ENCODE measurements at regions of chrX and their contacts with region 1.

Region 1: DNA sequence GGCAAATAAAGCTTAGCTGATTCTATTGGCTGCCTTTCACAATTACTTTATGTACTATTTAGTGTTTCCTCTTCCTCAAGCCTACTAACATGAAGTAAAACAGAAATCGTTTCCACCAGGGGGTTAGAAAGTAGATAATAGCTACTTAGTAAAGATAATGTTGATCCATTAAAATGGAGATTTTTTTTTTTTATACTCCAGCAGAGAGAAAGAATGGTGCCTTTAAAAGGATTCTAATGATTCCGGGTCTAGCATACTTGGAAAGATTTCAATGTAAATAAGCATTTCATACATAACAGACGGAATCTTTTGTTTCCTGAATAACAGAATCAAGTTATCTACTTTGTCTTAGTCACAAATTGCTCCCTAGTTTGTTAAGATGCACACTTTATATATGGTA is 37.1 kb downstream of the GK start:
- DNase-seq: no peak
- H3K4me3 Mint-ChIP-seq: no peak overlapping the region
- H3K27ac Mint-ChIP-seq: no peak overlapping the region
- H3K4me1 Mint-ChIP-seq: no peaks in the 10 kb centered on the region
- H3K27me3 Mint-ChIP-seq: no peaks in the 10 kb centered on the region

Region 2: DNA sequence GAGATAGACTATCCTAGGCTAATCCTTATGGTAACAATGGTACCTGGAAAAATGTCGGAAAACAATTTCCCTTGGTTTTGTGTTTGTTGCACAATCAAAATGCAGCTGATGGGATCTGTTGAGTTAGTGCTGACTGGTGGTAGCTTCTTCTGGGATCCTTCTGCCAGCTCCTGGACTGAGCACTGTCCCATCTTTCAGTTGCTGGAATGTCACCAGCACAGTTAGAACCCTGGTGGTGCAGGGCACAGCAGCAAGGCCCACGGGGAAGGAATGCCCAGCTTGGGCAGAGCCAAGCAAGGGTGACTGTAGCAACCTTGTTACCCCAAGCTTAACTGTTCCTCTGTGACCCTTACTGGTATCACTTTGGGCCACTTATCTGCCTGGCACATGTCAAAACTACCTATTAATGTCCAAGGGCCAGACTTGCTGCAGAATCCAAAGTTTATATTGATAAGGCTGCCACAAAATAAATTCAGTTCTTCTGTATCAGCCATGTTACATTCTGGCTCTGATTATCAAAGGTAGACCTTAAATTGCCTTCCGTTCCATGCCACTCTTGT is 16.0 kb after region 1 on chrX:
- intact Hi-C with region 1: loop called (anchors 2 kb)
- DNase-seq: no peak
- H3K4me3 Mint-ChIP-seq: no peak overlapping the region
- H3K27ac Mint-ChIP-seq: no peak overlapping the region
- H3K4me1 Mint-ChIP-seq: peaks cover 20% of the 10 kb centered on the region
- H3K27me3 Mint-ChIP-seq: no peaks in the 10 kb centered on the region

Region 3: GRCh38 chrX:30943984-30944780 is 253.9 kb after region 1 on chrX:
- intact Hi-C with region 1: no loop called
- DNase-seq: no peak
- H3K4me3 Mint-ChIP-seq: no peak overlapping the region
- H3K27ac Mint-ChIP-seq: no peak overlapping the region
- H3K4me1 Mint-ChIP-seq: peaks cover 3% of the 10 kb centered on the region
- H3K27me3 Mint-ChIP-seq: peaks cover 8% of the 10 kb centered on the region

Measured in activated T-helper 2 cell treated with anti-CD3 and anti-CD28 coated beads, Interferon-gamma antibody, Interleukin-2, Interleukin-4, amounts not matched to agents 10 μg/mL and 5 μg/mL and 100 μg/mL, durations not matched to agents 14 hours and 24 hours and 36 hours (primary cell).